ENCODE measurements at regions of chr17 and their contacts with region 1.

Region 1: DNA sequence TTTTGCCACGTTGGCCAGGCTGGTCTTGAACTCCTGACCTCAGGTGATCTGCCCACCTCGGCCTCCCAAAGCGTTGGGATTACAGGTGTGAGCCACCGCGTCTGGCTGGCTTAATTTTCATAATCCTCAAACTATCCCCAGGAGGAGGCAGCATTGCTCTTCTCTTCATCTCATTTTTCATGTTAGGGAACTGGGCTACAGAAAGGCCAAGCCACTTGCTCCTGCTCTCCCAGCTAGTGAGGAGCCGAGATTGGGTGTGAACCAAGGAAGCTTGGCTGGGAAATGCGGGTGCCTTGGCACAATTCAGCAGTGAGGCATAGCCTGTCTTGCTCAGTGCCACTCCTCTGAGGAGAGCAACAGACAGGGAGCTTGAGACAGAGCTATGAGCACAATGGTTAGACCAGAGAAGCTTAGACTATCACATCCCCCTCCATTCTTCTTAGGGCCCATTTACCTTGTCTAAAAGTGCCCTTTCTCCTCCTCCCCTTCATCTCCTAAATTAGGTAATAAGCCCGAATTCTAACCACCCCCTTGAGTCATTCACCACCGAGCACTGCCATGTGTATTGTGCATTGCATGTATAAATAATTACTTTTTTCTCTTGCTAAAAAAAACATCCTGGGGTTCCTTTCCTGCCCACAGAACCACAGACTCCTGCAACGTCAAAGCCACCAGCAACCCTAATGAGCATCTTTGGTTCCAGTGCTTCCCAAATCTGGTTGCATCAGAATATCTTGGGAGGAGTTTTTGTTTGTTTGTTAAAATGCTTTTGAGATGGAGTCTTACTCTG is 20.0 kb upstream of the KIF19 start:
- DNase-seq: no peak
- CTCF ChIP-seq: no peak

Region 2: DNA sequence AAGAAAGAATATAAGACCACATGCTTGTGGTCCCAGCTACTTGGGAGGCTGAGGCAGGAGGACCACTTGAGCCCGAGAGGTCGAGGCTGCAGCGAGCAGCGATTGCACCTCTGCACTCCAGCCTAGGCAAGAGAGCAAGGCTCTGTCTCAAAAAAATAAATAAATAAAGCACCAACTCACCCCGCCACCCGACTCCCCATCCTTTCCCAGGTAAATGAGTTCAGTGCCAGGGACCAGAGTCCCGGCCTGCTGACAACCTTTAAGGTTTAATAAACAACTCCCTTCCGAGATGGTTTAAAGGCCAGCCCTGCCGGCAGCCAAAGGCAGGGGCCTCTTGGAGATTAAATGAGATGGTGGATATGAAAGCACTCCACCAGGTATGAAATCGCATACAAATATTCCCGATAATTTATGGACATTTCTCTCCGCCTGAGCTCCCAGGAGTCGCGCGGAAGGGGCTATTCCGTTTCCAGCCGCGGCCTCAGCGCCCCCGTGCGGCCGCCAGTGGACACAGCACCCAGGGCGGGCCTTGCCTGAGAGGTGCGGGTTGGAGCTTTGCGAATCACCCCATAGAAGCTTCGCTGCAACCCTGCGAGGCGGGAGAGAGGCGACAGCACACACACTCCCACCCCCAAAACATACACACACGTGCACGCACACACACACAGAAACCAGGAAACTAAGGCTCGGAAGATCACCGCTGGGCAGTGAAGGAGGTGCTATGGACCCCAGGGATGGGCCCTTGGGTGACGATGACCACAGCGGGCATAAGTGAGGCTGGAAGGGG is 106.6 kb before region 1 on chr17:
- in situ Hi-C with region 1: no loop called
- DNase-seq: peak; percentile 79
- CTCF ChIP-seq: peak; percentile 96

Region 3: DNA sequence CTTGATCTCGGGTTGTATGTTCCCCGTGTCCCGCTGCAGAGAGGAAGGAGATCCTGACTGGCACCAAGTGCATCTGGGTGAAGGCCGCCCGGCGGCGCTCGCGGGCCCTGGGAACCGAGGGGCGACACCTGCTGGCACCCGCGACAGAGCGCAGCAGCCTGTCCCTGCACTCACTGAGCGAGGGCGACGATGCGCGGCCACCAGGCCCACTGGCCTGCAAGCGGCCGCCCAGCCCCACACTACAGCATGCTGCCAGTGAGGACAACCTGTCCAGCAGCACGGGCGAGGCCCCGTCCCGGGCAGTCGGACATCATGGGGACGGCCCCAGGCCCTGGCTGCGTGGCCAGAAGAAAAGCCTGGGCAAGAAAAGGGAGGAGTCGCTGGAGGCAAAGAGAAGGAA is 48.1 kb after region 1 on chr17:
- in situ Hi-C with region 1: loop called (anchors 10 kb)
- DNase-seq: peak; percentile 88
- CTCF ChIP-seq: peak; percentile 93